Activated naive CD4-positive, alpha-beta T cell treated with anti-CD3 and anti-CD28 coated beads, Interleukin-2, amount 10 ng/mL, durations not matched to agents 7 days and 5 days (primary cell): ENCODE measurements at regions of chr1 and their contacts with region 1.

Region 1: GRCh38 chr1:160862203-160863060 is at the start of gene CD244:
- DNase-seq: peak; percentile 44
- H3K4me3 Mint-ChIP-seq: no peak within 1 kb of the TSS
- H3K27ac Mint-ChIP-seq: no peak within 1 kb of the TSS
- H3K4me1 Mint-ChIP-seq: peaks cover 15% of the 10 kb centered on the region
- H3K27me3 Mint-ChIP-seq: peaks cover 20% of the 10 kb centered on the region

Region 2: DNA sequence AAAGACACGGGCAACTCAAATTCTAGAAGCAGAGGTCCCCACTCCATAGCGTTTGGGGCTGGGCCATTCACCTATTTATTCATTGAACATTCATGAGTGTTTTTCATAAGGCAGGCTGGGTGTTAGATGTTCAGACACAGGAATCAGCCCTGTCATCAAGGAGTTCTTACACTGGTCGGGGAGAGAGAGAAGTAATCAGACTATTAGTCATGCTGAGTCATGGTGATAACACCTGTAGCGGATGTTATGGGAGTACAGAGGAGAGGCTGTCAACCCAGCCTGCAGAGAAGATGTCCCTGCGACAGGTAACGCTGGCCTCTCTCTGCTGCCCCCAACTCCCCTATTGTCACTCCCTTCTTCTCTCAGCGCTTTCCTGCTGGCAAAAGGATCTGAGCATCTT is 49.2 kb before region 1 on chr1:
- CTCF ChIA-PET with region 1: no interaction called
- DNase-seq: no peak
- H3K4me3 Mint-ChIP-seq: no peak overlapping the region
- H3K27ac Mint-ChIP-seq: no peak overlapping the region
- H3K4me1 Mint-ChIP-seq: peaks cover 12% of the 10 kb centered on the region
- H3K27me3 Mint-ChIP-seq: no peaks in the 10 kb centered on the region

Region 3: DNA sequence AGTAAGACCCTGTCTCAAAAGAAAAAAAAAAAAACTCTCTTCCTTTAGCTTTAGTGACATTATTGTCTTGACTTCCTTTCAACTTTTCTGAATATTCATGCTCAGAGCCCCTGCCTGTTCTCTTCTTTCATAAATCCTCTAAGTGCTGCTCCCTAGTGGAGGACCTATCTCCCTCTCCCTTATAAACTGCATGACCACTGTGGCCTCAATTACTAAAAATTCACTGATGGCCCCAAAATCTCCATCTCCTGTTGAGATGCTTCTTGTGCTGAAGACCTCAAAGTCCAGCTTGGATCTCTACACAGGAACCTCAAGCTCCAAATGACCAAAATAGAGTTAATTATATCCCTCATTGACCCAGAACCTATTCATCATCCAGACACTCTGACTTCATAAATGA is 14.8 kb after region 1 on chr1:
- CTCF ChIA-PET with region 1: interaction called, 28 read pairs
- DNase-seq: peak; percentile 29
- H3K4me3 Mint-ChIP-seq: no peak overlapping the region
- H3K27ac Mint-ChIP-seq: no peak overlapping the region
- H3K4me1 Mint-ChIP-seq: peaks cover 5% of the 10 kb centered on the region
- H3K27me3 Mint-ChIP-seq: peaks cover 30% of the 10 kb centered on the region

Region 4: GRCh38 chr1:161098210-161099068 is 236.0 kb after region 1 on chr1 and contains the start of gene KLHDC9:
- CTCF ChIA-PET with region 1: no interaction called
- DNase-seq: peak; percentile 85
- H3K4me3 Mint-ChIP-seq: peak within 1 kb of the TSS; percentile 81
- H3K27ac Mint-ChIP-seq: peak within 1 kb of the TSS; percentile 89
- H3K4me1 Mint-ChIP-seq: peaks cover 26% of the 10 kb centered on the region
- H3K27me3 Mint-ChIP-seq: peaks cover 41% of the 10 kb centered on the region